ENCODE measurements at regions of chr11 and their contacts with region 1.

Region 1: DNA sequence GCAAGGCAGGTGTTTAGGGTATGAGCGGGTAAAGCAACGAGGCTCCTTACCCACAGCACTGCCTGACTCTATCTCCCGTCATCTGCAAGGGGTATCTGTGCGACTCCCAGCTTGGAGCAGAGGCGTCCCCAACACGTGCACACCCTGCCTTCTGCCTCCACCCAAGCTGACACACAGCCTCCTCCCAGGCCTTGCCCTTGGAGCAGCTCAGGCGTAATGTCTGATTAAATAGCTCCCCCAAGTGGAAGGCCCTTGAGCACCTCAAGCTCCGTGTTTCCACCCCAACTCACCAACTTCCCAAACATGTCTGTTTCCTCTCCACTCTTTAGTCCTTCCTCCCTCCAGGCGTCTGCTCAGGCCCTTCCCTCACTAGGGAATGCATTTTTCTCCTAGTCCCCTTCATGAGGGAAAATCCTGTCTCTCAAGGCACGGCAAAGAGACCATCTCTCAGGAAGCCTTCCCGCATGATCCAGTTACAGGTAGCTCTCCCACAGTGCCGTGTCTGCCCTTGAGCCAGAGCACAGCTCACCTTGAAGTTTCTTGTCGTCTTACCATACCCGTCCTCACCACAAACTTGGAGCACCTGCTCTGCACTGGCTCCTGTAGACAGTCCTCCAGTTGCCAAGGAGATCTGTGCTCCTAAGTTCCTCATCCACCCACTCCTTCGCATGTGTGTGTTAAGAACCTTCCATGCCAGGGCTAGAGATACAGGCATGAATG is 15.8 kb downstream of the CYB5R2 start:
- DNase-seq: peak; percentile 28
- ATAC-seq: peak; percentile 93
- H3K4me3 ChIP-seq: no peak overlapping the region
- H3K27ac ChIP-seq: no peak overlapping the region
- H3K4me1 ChIP-seq: no peaks in the 10 kb centered on the region
- H3K27me3 ChIP-seq: no peaks in the 10 kb centered on the region
- CTCF ChIP-seq: peak; percentile 43 to 67 (median 49); a peak in 5 of 6 replicates
- POLR2A ChIP-seq: no peak
- RAD21 ChIP-seq: peak; percentile 85

Region 2: GRCh38 chr11:6794639-6795038 is 862.8 kb before region 1 on chr11:
- CTCF ChIA-PET with region 1: no interaction called
- POLR2A ChIA-PET with region 1: no interaction called
- RAD21 ChIA-PET with region 1: no interaction called
- intact Hi-C with region 1: no loop called
- DNase-seq: no peak
- ATAC-seq: no peak
- H3K4me3 ChIP-seq: no peak overlapping the region
- H3K27ac ChIP-seq: no peak overlapping the region
- H3K4me1 ChIP-seq: no peaks in the 10 kb centered on the region
- H3K27me3 ChIP-seq: peaks cover 10% of the 10 kb centered on the region; the same call in 1 of the 2 replicates
- CTCF ChIP-seq: no peak
- POLR2A ChIP-seq: no peak
- RAD21 ChIP-seq: no peak

Region 3: DNA sequence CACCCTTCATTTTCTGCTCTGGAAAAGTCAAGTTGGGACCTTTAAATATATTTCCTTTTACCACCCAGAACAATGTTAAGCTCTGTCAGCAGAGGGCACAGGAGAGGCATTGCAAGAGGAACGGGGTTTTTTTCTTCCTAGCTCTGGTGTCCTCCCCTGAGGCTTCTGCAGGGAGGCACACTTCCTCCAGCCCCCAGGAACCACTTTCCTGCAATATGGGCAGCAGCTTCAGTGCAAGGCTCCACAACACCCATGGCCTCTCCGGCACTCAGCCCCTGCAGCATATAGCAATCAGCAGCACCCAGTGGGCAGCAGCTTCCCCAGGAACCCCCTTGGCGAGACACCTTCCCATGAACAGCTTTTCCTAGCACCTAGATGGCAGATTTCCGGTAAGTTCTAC is 304.4 kb before region 1 on chr11:
- CTCF ChIA-PET with region 1: interaction called, 13 read pairs
- POLR2A ChIA-PET with region 1: no interaction called
- RAD21 ChIA-PET with region 1: no interaction called
- intact Hi-C with region 1: no loop called
- DNase-seq: peak; percentile 22
- ATAC-seq: peak; percentile 85
- H3K4me3 ChIP-seq: no peak overlapping the region
- H3K27ac ChIP-seq: no peak overlapping the region
- H3K4me1 ChIP-seq: no peaks in the 10 kb centered on the region
- H3K27me3 ChIP-seq: peaks cover 55% of the 10 kb centered on the region
- CTCF ChIP-seq: peak; percentile 49 to 63 (median 57); a peak in 5 of 6 replicates
- POLR2A ChIP-seq: no peak
- RAD21 ChIP-seq: peak; percentile 53

Region 4: DNA sequence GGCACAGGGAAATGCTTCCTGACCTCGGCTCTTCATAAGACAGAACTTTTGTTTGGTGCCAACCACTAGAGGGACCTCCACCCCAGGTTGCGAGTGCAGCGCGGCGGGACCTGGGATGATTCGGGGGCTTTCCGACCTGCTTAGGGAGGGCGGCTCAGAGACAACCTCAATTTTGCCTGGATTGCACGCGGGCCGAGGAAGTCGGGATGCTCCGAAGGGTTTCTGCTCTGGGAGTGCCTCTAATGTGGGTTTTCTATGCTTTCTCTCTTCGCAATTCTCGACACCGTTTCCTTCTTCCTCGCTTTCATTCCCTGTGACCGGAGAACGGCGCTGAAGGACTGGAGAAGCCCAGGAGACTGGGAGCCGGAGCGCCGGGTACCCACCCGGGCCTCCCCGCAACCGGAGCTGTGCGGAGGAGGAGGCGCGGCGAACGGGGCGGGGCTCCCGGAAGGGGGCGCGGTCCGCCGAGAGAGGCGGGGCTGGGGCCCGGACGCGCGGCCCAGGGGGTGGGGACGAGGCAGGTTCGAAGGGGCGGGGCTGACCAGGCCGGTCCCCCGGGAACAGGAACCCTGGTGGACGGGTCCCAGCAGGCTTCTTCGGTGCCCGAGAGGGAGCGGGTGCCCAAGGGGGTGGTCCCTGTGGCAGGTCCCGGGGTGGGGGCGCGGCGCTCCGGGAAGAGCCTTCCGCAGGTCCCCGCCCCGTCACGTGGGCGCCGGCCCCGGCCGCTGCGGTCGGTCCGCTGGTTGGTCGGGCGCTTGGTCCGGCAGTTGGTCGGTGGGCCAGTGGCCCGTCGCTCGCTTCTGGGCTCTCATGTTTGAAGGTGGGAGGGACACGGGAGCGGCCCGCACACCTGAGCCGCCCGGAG is 144.0 kb before region 1 on chr11 and contains the start of gene PPFIBP2:
- CTCF ChIA-PET with region 1: interaction called, 14 read pairs
- POLR2A ChIA-PET with region 1: no interaction called
- RAD21 ChIA-PET with region 1: interaction called in 1 of 2 experiments, 4 read pairs
- intact Hi-C with region 1: no loop called
- DNase-seq: peak; percentile 40
- ATAC-seq: peak; percentile 92
- H3K4me3 ChIP-seq: peak within 1 kb of the TSS; percentile 54 to 74
- H3K27ac ChIP-seq: peak within 1 kb of the TSS; percentile 63; the same call in 1 of the 2 replicates
- H3K4me1 ChIP-seq: peaks cover 8 to 19% of the 10 kb centered on the region in 2 experiments; a peak in 3 of 4 replicates
- H3K27me3 ChIP-seq: no peaks in the 10 kb centered on the region; the same call in 1 of the 2 replicates
- CTCF ChIP-seq: peak; percentile 67 to 74 (median 67); a peak in 5 of 6 replicates
- POLR2A ChIP-seq: no peak
- RAD21 ChIP-seq: peak; percentile 65
- total RNA-seq, gene PPFIBP2: 5.7 TPM

Region 5: GRCh38 chr11:7548659-7549274 is 108.7 kb before region 1 on chr11:
- CTCF ChIA-PET with region 1: interaction called, 24 read pairs
- POLR2A ChIA-PET with region 1: no interaction called
- RAD21 ChIA-PET with region 1: interaction called in 1 of 2 experiments, 6 read pairs
- intact Hi-C with region 1: loop called (anchors 1 kb)
- DNase-seq: peak; percentile 16
- ATAC-seq: peak; percentile 99
- H3K4me3 ChIP-seq: no peak overlapping the region
- H3K27ac ChIP-seq: no peak overlapping the region
- H3K4me1 ChIP-seq: no peaks in the 10 kb centered on the region
- H3K27me3 ChIP-seq: no peaks in the 10 kb centered on the region
- CTCF ChIP-seq: peak; percentile 67 to 80 (median 73); a peak in 5 of 6 replicates
- POLR2A ChIP-seq: no peak
- RAD21 ChIP-seq: peak; percentile 61

Region 6: GRCh38 chr11:7571640-7572000 is 85.8 kb before region 1 on chr11:
- CTCF ChIA-PET with region 1: interaction called, 52 read pairs
- POLR2A ChIA-PET with region 1: no interaction called
- RAD21 ChIA-PET with region 1: interaction called, 15 to 16 read pairs
- intact Hi-C with region 1: loop called (anchors 2 kb)
- DNase-seq: peak; percentile 51
- ATAC-seq: peak; percentile 91
- H3K4me3 ChIP-seq: no peak overlapping the region
- H3K27ac ChIP-seq: no peak overlapping the region
- H3K4me1 ChIP-seq: peaks cover 16 to 25% of the 10 kb centered on the region in 2 experiments
- H3K27me3 ChIP-seq: no peaks in the 10 kb centered on the region
- CTCF ChIP-seq: peak; percentile 91 to 94 (median 92)
- POLR2A ChIP-seq: no peak
- RAD21 ChIP-seq: peak; percentile 95